Activated CD4-positive, alpha-beta memory T cell treated with anti-CD3 and anti-CD28 coated beads for 36 hours (primary cell): ENCODE measurements at regions of chr3 and their contacts with region 1.

Region 1: GRCh38 chr3:46976326-46977190 is at the start of gene CCDC12:
- DNase-seq: peak; percentile 97
- H3K4me3 Mint-ChIP-seq: peak within 1 kb of the TSS; percentile 92
- H3K27ac Mint-ChIP-seq: peak within 1 kb of the TSS; percentile 97
- H3K4me1 Mint-ChIP-seq: peaks cover 57% of the 10 kb centered on the region
- H3K27me3 Mint-ChIP-seq: no peaks in the 10 kb centered on the region
- total RNA-seq, gene CCDC12: 44.3 to 49.9 TPM

Region 2: GRCh38 chr3:46947981-46948791 is 28.4 kb before region 1 on chr3:
- CTCF ChIA-PET with region 1: interaction called, 3 read pairs
- POLR2A ChIA-PET with region 1: interaction called, 17 read pairs
- intact Hi-C with region 1: loop called (anchors 1 kb)
- DNase-seq: peak; percentile 82
- H3K4me3 Mint-ChIP-seq: peak overlapping the region; percentile 62
- H3K27ac Mint-ChIP-seq: peak overlapping the region; percentile 95
- H3K4me1 Mint-ChIP-seq: peaks cover 76% of the 10 kb centered on the region
- H3K27me3 Mint-ChIP-seq: no peaks in the 10 kb centered on the region

Region 3: DNA sequence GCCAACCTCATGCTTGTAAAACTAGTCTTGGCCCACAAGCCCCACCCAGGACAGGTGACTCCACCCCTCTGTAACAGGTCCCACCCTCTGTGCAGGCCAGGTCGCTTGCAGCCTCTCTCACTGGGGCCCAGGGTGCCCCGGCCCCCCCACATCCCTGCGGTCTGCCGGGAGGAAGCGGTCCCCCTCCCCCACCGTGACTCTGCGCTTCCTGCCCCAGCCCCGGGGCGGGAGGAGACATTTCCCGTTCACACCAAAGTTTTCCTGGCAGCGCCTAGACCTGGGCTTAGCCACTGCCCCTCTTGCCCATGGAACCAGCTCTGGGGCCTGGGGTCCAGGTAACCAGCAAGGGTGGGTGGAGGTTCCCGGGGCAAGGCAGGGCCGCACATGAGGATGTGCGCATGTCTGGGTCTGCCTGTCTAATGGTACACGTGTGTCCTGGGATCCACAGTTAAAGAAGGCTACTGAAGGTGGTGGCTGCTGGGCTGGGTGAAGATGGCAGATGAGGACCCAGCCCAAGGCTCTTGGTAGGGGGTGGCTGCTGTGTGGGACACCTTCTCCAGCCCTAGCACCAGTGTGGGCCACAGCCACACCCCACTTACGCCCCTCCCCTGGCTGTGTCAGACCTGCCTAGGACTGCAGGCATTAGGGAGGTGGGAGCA is 11.3 kb after region 1 on chr3:
- CTCF ChIA-PET with region 1: interaction called, 4 read pairs
- POLR2A ChIA-PET with region 1: interaction called, 18 read pairs
- intact Hi-C with region 1: loop called (anchors 1 kb)
- DNase-seq: peak; percentile 94
- H3K4me3 Mint-ChIP-seq: peak overlapping the region; percentile 79
- H3K27ac Mint-ChIP-seq: peak overlapping the region; percentile 96
- H3K4me1 Mint-ChIP-seq: peaks cover 72% of the 10 kb centered on the region
- H3K27me3 Mint-ChIP-seq: no peaks in the 10 kb centered on the region

Region 4: GRCh38 chr3:47035634-47036033 is 59.1 kb after region 1 on chr3:
- CTCF ChIA-PET with region 1: no interaction called
- POLR2A ChIA-PET with region 1: interaction called, 5 read pairs
- intact Hi-C with region 1: loop called (anchors 5 kb)
- DNase-seq: no peak
- H3K4me3 Mint-ChIP-seq: no peak overlapping the region
- H3K27ac Mint-ChIP-seq: no peak overlapping the region
- H3K4me1 Mint-ChIP-seq: peaks cover 43% of the 10 kb centered on the region
- H3K27me3 Mint-ChIP-seq: no peaks in the 10 kb centered on the region

Region 5: GRCh38 chr3:47380601-47381316 is 404.2 kb after region 1 on chr3 and contains the start of gene PTPN23:
- CTCF ChIA-PET with region 1: no interaction called
- POLR2A ChIA-PET with region 1: interaction called, 4 read pairs
- intact Hi-C with region 1: loop called (anchors 1 kb)
- DNase-seq: peak; percentile 99
- H3K4me3 Mint-ChIP-seq: peak within 1 kb of the TSS; percentile 99
- H3K27ac Mint-ChIP-seq: peak within 1 kb of the TSS; percentile 98
- H3K4me1 Mint-ChIP-seq: peaks cover 47% of the 10 kb centered on the region
- H3K27me3 Mint-ChIP-seq: no peaks in the 10 kb centered on the region
- total RNA-seq, gene PTPN23: 27.9 to 29.7 TPM